Pancreas (tissue), 10 donors: ENCODE measurements at regions of chr7 and their contacts with region 1.

Region 1: DNA sequence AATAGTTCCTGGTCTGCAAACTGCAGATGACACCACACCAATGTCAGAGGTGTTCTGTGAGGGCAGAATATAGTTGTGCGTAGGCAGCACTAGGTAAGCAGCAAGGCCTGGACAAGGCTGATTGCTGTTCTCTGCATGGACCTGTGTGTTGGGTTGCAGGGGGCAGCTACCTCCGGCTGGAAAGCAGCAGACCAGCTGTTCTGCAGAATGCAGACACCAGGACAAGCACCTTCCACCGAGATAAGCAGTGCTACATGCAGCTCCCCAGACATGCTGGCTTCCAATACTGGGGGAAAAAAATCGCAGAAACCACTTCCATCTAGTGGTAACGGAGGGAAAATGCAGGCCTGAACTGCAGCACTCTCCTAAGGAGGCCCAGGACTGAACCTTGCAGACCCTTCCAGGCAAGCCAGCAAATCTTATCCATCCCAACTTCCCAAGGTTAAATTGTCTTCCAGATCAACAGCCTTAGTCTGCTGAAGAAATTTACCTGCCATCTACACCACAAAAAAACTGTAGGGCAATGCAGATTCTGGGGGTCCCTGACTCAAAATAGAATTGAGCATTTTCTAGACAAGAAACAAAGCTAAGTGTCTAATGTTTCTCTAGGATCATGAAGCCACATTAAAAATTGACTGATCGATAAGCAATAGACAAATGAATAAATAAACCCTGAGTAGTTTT is 50.5 kb upstream of the COBL start:
- DNase-seq: peak in 3 of 6 donors; percentile 44 to 66 (median 45)
- ATAC-seq: peak; percentile 91 to 99 (median 97)
- H3K4me3 ChIP-seq: no peak overlapping the region
- H3K27ac ChIP-seq: no peak overlapping the region
- H3K4me1 ChIP-seq: no peaks in the 10 kb centered on the region
- H3K27me3 ChIP-seq: no peaks in the 10 kb centered on the region
- CTCF ChIP-seq: peak; percentile 49 to 74 (median 58)

Region 2: GRCh38 chr7:51162724-51163329 is 204.2 kb before region 1 on chr7:
- intact Hi-C with region 1: loop called in 1 of 3 experiments (anchors 5 kb)
- DNase-seq: peak in 5 of 6 donors; percentile 55 to 86 (median 67)
- ATAC-seq: peak; percentile 82 to 95 (median 92)
- H3K4me3 ChIP-seq: no peak overlapping the region
- H3K27ac ChIP-seq: no peak overlapping the region
- H3K4me1 ChIP-seq: peaks cover 0 to 4% (median 0%) of the 10 kb centered on the region in 3 donors
- H3K27me3 ChIP-seq: no peaks in the 10 kb centered on the region
- CTCF ChIP-seq: peak; percentile 65 to 76 (median 70)

Region 3: DNA sequence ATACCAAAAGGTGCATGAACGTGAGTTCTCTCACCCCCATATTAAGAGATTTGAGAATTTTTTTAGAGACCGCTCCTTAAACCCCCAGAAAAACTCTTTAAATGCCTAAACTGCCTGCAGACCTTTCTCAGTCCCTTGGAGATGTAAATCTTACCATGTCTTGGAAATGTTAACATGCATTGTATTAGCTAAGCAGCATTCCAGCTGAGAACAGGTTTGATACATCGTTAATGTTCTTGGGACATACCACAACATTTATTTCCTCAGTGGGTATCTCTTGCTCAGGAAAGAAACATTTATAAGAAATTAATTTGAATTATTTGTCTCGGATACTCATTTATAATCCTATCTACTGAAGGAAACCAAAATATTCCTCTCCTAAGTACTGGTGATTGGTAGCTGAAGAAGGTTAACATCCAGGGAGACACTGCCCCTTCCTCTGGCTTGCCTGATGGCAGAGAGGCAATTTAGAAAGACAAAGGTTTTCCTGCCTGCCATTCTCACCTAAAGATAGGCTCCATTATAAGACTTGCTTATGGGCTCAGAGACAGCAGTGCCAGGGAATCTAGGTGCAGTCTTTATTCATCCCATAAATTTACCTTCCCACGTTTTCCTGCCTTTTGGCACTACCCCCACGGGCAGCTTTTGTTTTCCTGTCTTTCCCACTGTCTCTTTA is 191.6 kb before region 1 on chr7:
- intact Hi-C with region 1: loop called in 1 of 3 experiments (anchors 10 kb)
- DNase-seq: no peak
- ATAC-seq: no peak
- H3K4me3 ChIP-seq: no peak overlapping the region
- H3K27ac ChIP-seq: no peak overlapping the region
- H3K4me1 ChIP-seq: peaks cover 0 to 3% (median 0%) of the 10 kb centered on the region in 3 donors
- H3K27me3 ChIP-seq: no peaks in the 10 kb centered on the region
- CTCF ChIP-seq: no peak

Region 4: DNA sequence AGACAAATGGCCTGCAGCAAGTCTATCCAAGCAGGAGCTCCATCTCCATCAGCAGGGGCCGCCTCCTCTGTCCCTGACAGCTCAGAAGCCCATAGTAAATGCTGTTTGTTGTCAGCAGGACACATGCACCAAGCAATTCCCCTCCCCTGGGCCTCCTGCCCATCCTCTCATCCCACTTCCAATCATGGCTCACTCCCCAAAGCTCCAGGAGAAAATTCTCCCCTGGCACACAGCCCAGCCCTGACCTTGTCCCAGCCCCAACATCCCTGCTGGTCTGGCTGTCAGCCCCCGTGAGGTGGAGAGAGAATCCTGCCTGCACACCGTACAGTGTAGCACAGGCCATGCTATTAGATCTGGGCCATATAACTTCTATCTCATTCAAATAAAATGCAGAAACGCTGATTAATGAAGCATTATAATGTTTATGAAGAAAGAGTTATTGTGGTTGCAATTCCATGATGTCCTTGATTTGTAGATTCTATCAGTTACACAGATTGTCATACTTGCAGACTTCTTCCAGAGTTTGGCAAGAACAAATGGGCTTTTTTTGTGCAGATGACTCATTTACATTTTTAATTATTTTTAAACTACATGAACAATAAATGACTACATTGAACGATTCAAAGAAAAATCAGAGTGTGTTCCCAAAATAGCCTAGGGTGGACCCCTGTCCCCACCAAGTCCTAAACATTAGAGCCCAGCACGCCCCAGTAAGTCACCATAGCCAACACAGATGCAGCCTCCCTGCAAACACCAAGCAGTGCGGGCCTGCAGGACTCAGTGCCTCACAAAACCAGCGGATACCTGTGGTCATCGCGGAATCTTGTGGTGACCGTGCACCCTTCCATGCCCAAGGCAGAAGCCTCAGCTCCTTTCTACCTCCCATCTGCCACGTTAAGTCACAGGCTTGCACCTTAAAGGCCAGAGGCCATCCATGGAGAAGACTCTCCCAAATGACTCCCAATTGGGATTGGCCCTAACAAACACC is 120.5 kb before region 1 on chr7:
- intact Hi-C with region 1: no loop called
- DNase-seq: peak in 2 of 6 donors; percentile 27 to 44
- ATAC-seq: peak in 2 of 4 donors; percentile 35 to 48
- H3K4me3 ChIP-seq: no peak overlapping the region
- H3K27ac ChIP-seq: no peak overlapping the region
- H3K4me1 ChIP-seq: no peaks in the 10 kb centered on the region
- H3K27me3 ChIP-seq: no peaks in the 10 kb centered on the region
- CTCF ChIP-seq: no peak

Region 5: DNA sequence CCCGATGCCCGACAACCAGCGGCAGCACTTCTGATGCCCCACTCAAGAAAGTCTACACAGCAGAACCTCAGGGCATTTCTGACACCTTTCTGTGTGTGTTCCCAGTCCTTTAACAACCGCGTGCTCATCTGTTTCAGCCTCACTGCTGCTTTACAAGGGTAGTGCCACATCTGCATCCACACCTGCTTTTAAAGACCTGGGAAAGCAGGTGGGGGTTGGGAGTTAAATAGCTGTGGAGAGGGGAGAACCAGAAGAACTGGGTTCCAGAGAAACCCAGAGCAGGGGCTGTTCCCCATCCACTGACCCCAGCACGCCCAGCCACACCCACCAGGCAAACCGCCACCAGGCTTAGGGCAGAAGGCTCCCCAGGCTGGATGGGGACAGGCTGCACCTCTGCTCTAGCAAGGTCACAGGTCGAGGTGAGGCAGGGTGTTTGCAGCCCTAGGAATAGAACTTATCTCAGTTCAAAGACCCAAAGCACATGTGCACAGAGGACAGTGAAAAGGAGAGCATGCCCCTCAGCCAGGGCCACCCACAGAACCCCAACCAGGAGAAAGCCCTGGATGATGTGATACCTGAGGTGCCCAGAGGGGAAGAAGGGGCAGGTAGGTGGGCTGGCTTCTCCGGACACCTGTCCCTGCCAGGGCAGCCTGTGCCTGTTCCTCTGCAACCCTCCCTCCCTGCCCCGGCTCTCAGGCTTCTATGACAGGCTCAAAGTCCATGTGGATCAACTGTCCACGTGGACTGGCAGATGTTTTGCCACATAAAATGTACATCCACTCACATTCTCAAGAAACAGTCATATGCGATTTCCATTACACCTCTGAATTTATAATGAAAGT is 101.8 kb before region 1 on chr7:
- intact Hi-C with region 1: loop called in 1 of 3 experiments (anchors 5 kb)
- DNase-seq: peak in 5 of 6 donors; percentile 41 to 73 (median 57)
- ATAC-seq: peak; percentile 38 to 64 (median 52)
- H3K4me3 ChIP-seq: no peak overlapping the region
- H3K27ac ChIP-seq: peak overlapping the region in 2 of 4 donors; percentile 42 to 78
- H3K4me1 ChIP-seq: peaks cover 52 to 59% (median 58%) of the 10 kb centered on the region in 3 donors
- H3K27me3 ChIP-seq: no peaks in the 10 kb centered on the region
- CTCF ChIP-seq: no peak

Region 6: DNA sequence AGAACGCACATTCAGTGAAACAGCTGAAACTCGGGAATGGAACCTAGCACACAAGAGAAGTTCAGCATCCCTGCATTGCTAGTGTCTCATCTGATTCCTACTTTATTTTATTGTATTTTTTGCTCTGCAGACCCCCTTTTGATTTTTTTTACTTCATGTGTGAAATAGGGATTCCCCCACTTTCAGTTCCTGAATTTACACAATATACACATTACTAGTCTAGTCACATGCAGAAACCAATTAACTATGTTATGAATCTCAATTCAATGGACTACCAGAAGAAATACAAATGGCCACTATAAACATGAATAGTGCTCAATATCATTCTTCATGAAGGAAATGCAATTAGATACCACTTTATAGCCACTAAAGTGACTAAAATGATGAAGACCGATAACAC is 335.6 kb after region 1 on chr7:
- intact Hi-C with region 1: no loop called
- DNase-seq: no peak
- ATAC-seq: no peak
- H3K4me3 ChIP-seq: no peak overlapping the region
- H3K27ac ChIP-seq: no peak overlapping the region
- H3K4me1 ChIP-seq: no peaks in the 10 kb centered on the region
- H3K27me3 ChIP-seq: no peaks in the 10 kb centered on the region
- CTCF ChIP-seq: no peak